ENCODE measurements at regions of chr7 and their contacts with region 1.

Region 1: DNA sequence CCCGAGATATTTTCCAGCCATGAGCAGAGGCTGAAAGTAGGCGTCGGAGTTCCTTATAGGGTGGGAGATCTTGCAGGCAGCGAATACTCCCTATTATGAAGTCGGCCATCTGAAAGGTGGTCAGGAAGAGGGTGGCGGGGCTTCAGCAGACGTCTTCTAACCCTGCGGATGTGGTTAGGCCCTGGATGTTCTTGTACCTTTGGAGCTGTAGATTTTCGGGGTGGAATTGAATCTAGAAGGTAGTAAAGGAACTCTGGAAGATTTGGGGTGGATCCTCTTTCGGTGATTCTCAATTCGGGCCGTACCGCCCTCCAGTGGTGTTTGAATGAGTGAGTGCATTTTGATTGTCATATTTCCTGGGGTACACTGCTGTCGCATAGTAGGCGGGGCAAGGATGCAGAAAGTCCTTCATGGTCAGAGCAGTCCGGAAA is 635 bp downstream of the NUP205 start:
- DNase-seq: peak; percentile 83
- ATAC-seq: peak; percentile 63
- H3K4me3 ChIP-seq: peak overlapping the region; percentile 77 to 100 (median 97)
- H3K4me3 Mint-ChIP-seq: no peak overlapping the region
- H3K27ac ChIP-seq: peak overlapping the region; percentile 95 to 98
- H3K27ac Mint-ChIP-seq: no peak overlapping the region
- H3K4me1 ChIP-seq: peaks cover 3 to 6% of the 10 kb centered on the region in 2 donors
- H3K4me1 Mint-ChIP-seq: peaks cover 14% of the 10 kb centered on the region
- H3K27me3 ChIP-seq: no peaks in the 10 kb centered on the region
- H3K27me3 Mint-ChIP-seq: peaks cover 5% of the 10 kb centered on the region
- CTCF ChIP-seq: peak; percentile 70

Region 2: DNA sequence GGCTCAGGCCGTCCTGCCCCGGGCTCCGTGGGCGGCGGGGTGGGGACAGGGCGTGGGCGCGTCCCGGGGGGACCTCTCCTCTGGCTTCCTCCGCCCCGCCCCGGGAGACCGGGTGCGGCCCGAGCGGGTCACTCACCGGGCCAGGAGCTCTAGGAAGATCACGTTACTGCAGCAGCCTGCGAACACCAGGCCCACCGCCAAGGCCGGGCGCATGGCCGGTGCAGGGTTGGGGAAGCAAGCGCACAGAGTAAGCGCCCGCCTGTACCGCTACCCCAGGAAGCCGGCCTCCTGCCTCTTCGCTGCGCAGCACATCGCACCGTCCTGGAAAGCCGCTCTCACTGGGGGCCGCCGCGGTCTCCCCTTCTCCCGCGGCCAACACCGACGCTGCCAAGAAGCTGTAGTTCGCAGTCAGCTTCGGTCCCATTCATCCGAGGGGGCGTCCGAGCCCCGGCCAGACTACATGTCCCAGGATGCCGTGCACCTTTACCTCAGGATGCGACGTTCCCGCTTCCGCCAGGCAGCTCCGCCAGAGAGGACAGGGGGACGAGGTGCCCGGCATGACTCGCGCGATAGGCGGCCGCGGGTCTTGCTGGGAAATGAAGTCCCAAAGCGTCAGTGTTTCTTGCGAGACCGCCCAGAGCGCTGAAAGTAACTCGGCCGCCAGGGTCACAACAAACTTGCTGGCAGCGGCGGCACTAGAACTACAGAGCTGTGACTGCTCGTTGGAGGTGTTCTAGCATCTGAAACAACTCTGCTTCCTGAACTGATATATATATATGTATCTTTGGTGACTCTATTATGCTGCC is 1241.6 kb before region 1 on chr7 and contains the start of gene SLC35B4:
- CTCF ChIA-PET with region 1: no interaction called
- POLR2A ChIA-PET with region 1: no interaction called
- intact Hi-C with region 1: loop called (anchors 5 kb)
- DNase-seq: peak; percentile 94
- ATAC-seq: peak; percentile 98
- H3K4me3 ChIP-seq: peak within 1 kb of the TSS; percentile 52 to 95 (median 84)
- H3K4me3 Mint-ChIP-seq: peak within 1 kb of the TSS; percentile 95
- H3K27ac ChIP-seq: peak within 1 kb of the TSS; percentile 46 to 68
- H3K27ac Mint-ChIP-seq: peak within 1 kb of the TSS; percentile 85
- H3K4me1 ChIP-seq: peaks cover 10 to 14% of the 10 kb centered on the region in 2 donors
- H3K4me1 Mint-ChIP-seq: peaks cover 18% of the 10 kb centered on the region
- H3K27me3 ChIP-seq: no peaks in the 10 kb centered on the region
- H3K27me3 Mint-ChIP-seq: no peaks in the 10 kb centered on the region
- CTCF ChIP-seq: peak; percentile 41
- total RNA-seq, gene SLC35B4: 8.0 and 14.8 TPM in 2 replicates

Region 3: DNA sequence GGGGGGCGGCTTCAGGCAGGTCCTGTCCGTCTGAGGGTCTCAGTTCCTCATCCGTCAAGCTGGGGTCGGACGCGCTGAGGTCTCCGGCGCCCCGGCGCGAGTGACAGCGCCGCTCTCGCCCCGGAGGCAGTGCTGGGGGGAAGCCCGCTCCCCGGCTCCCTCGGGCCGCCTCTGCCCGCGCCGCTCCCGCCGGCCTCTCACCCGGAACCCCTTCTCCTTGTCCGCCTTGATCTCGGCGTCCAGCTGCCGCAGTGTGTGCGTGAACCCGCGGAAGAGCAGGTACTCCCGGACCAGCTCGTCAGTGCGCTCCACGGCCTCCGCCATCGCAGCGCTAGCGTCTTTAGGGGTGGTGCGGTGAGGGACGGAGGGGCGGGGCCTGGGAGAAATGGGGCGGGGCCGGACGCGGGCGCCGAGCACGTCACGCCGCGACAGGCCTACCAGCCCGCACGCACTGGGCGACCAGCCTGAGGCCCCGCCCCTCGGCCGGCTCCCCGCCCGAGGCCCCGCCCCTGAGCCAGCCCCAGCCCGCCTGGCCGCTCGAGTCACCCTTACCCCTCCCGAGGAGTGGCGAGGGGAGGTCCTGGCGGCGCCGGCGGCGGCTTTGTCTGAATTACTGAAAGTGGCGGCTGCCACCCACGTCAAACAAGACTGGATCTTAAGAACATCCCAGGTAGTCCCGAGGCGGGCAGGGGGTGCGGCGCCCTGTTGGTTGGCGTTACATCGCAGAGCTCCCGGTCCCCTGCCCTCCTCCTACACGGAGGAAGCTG is 347.0 kb before region 1 on chr7 and contains the start of gene WDR91:
- CTCF ChIA-PET with region 1: no interaction called
- POLR2A ChIA-PET with region 1: no interaction called
- intact Hi-C with region 1: loop called (anchors 1 kb)
- DNase-seq: peak; percentile 95
- ATAC-seq: peak; percentile 94
- H3K4me3 ChIP-seq: peak within 1 kb of the TSS; percentile 82 to 98 (median 88)
- H3K4me3 Mint-ChIP-seq: peak within 1 kb of the TSS; percentile 98
- H3K27ac ChIP-seq: peak within 1 kb of the TSS; percentile 77 to 92
- H3K27ac Mint-ChIP-seq: peak within 1 kb of the TSS; percentile 97
- H3K4me1 ChIP-seq: peaks cover 34 to 35% of the 10 kb centered on the region in 2 donors
- H3K4me1 Mint-ChIP-seq: peaks cover 48% of the 10 kb centered on the region
- H3K27me3 ChIP-seq: no peaks in the 10 kb centered on the region
- H3K27me3 Mint-ChIP-seq: no peaks in the 10 kb centered on the region
- CTCF ChIP-seq: no peak
- total RNA-seq, gene WDR91: 40.7 and 47.0 TPM in 2 replicates

Region 4: GRCh38 chr7:135425036-135425435 is 133.3 kb before region 1 on chr7:
- CTCF ChIA-PET with region 1: no interaction called
- POLR2A ChIA-PET with region 1: no interaction called
- intact Hi-C with region 1: no loop called
- DNase-seq: no peak
- ATAC-seq: no peak
- H3K4me3 ChIP-seq: no peak overlapping the region
- H3K4me3 Mint-ChIP-seq: no peak overlapping the region
- H3K27ac ChIP-seq: no peak overlapping the region
- H3K27ac Mint-ChIP-seq: no peak overlapping the region
- H3K4me1 ChIP-seq: peaks cover 0 to 3% of the 10 kb centered on the region in 2 donors
- H3K4me1 Mint-ChIP-seq: peaks cover 24% of the 10 kb centered on the region
- H3K27me3 ChIP-seq: no peaks in the 10 kb centered on the region
- H3K27me3 Mint-ChIP-seq: no peaks in the 10 kb centered on the region
- CTCF ChIP-seq: no peak

Region 5: DNA sequence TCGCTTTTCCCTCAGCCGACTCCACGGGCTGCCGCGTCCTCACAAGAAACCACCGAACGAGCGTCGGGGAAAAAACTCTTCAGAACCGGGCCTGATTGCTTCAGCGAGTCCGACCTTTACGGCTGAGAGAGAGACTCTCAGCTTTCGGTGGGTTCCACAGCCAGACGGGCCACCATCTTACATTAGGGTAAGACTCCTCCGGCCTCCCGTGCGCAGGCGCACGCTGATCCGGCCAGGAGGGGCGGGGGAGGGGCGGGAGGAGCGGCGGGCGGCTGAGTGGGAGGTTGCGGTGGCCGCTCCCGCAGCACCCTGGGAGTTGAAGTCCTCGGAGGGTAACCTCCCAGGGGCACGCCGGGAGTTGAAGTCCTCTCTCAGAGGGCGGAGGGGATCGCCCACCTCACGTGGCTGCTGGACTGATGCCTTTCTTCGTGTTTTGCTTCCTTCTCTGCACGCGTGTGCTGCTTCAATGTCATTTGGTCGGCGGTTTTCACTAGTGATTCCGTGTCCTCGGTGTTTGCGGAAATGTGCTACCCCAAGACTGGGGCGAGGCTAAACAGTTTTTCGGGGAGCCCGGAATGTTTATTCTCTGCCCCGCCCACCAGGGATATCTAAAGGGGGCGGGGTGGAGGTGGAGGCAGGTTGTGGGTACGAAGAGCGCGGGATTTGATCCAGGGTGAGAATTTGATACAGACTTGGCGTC is 48.3 kb before region 1 on chr7 and contains the start of gene CNOT4:
- CTCF ChIA-PET with region 1: interaction called, 4 read pairs
- POLR2A ChIA-PET with region 1: no interaction called
- intact Hi-C with region 1: loop called (anchors 1 kb)
- DNase-seq: peak; percentile 97
- ATAC-seq: peak; percentile 95
- H3K4me3 ChIP-seq: peak within 1 kb of the TSS; percentile 79 to 96 (median 89)
- H3K4me3 Mint-ChIP-seq: no peak within 1 kb of the TSS
- H3K27ac ChIP-seq: peak within 1 kb of the TSS; percentile 92 to 96
- H3K27ac Mint-ChIP-seq: no peak within 1 kb of the TSS
- H3K4me1 ChIP-seq: peaks cover 17 to 24% of the 10 kb centered on the region in 2 donors
- H3K4me1 Mint-ChIP-seq: peaks cover 10% of the 10 kb centered on the region
- H3K27me3 ChIP-seq: no peaks in the 10 kb centered on the region
- H3K27me3 Mint-ChIP-seq: no peaks in the 10 kb centered on the region
- CTCF ChIP-seq: no peak
- total RNA-seq, gene CNOT4: 52.1 and 55.1 TPM in 2 replicates

Region 6: GRCh38 chr7:135575296-135575695 is 16.9 kb after region 1 on chr7:
- CTCF ChIA-PET with region 1: no interaction called
- POLR2A ChIA-PET with region 1: no interaction called
- intact Hi-C with region 1: no loop called
- DNase-seq: peak; percentile 39
- ATAC-seq: no peak
- H3K4me3 ChIP-seq: no peak overlapping the region
- H3K4me3 Mint-ChIP-seq: no peak overlapping the region
- H3K27ac ChIP-seq: peak overlapping the region; percentile 28 to 60
- H3K27ac Mint-ChIP-seq: peak overlapping the region; percentile 75
- H3K4me1 ChIP-seq: peaks cover 6 to 9% of the 10 kb centered on the region in 2 donors
- H3K4me1 Mint-ChIP-seq: peaks cover 19% of the 10 kb centered on the region
- H3K27me3 ChIP-seq: no peaks in the 10 kb centered on the region
- H3K27me3 Mint-ChIP-seq: no peaks in the 10 kb centered on the region
- CTCF ChIP-seq: no peak

Region 7: GRCh38 chr7:135634191-135634878 is 76.0 kb after region 1 on chr7:
- CTCF ChIA-PET with region 1: no interaction called
- POLR2A ChIA-PET with region 1: no interaction called
- intact Hi-C with region 1: no loop called
- DNase-seq: no peak
- ATAC-seq: no peak
- H3K4me3 ChIP-seq: no peak overlapping the region
- H3K4me3 Mint-ChIP-seq: no peak overlapping the region
- H3K27ac ChIP-seq: no peak overlapping the region
- H3K27ac Mint-ChIP-seq: no peak overlapping the region
- H3K4me1 ChIP-seq: no peaks in the 10 kb centered on the region
- H3K4me1 Mint-ChIP-seq: no peaks in the 10 kb centered on the region
- H3K27me3 ChIP-seq: no peaks in the 10 kb centered on the region
- H3K27me3 Mint-ChIP-seq: no peaks in the 10 kb centered on the region
- CTCF ChIP-seq: no peak